Tibial artery (tissue), 4 donors: ENCODE measurements at regions of chr1 and their contacts with region 1.

Region 1: DNA sequence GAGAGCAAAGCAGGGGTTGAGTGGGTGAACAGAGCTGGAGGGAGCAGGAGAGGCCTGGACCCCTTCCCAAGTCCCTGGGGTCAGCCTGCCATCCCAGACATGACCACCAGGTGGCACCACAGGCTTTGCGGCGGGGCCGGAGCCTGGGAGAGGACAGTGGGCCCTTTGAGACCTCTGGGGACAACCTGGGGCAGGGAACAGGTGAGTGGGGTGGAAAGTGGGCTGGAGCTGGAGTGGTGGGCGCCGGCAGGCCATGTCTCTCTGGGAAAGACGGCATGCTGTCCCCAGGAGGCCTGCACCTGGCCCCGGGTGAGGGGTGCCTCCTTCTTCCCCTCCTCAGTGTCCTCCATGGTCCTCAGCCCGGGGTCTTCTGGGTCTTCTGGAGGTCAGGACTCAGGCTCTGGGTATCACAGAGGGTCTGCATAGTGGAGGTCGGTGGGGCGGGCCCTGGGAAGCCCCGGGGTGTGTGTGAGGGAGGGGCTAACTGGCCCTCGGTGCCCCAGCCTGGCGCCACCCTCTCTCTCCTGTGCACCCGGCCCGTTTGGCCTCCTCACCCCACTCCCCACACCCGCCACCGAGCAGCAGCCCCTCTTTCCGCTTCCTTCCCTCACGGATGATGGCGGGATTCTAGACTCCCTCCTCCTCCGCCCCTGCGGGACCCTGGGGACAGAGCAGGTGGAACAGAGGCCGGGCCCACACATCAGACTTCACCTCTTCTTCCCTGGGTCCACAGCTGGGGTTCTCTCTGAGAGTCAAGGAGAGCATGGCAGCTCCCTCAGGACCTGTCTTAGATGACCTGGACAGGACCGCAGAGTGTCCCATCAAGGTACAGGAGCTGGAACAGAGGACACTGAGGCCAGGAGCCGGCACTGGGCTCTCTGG is 28.4 kb upstream of the PKP1 start:
- DNase-seq: no peak
- H3K4me3 ChIP-seq: no peak overlapping the region
- H3K27ac ChIP-seq: no peak overlapping the region
- H3K4me1 ChIP-seq: peaks cover 0 to 6% (median 4%) of the 10 kb centered on the region in 4 donors
- H3K27me3 ChIP-seq: peaks cover 0 to 25% of the 10 kb centered on the region in 2 donors
- CTCF ChIP-seq: peak; percentile 94 to 97

Region 2: DNA sequence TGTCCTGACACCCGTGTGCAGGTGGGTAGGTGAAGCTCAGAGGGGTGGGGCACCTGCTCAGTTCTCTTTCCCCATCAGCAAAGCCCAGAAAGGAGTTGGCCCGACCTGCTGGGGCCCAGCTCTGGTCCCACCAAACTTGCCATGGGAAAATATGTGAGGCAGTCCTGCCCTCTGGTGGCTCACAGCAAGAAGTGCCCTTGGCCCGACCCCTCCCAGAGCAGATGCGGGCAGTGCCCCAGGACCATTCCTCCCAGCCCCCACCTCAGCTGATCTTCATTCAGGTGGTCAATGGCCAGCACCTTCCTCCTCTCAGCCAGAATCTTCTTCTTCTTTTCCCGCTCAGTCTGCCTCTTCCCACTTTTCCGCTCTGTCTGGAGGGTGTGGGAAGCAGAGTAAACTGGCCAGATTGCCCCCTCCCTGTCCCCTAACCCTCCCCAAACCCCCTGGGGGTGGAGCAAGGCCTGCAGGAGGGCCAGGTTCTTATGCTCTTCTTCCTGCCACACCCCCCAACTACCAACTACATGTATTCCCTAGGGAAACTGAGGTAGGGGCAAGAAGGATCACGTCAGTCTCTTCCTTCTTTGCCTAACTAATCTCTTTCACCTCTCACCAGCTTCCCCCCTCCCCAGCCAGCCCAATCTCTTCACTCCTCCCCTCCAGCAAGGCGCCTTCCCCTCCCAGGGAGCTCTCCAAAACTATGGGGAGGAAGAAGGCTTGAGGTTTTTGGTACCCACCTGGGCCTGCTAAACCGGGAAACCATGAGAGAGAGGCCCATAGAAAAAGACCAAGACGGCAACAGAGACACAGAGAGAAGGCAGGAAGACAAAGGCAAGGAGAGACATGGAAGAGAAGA is 107.0 kb after region 1 on chr1:
- intact Hi-C with region 1: loop called (anchors 5 kb)
- DNase-seq: no peak
- H3K4me3 ChIP-seq: no peak overlapping the region
- H3K27ac ChIP-seq: no peak overlapping the region
- H3K4me1 ChIP-seq: no peaks in the 10 kb centered on the region
- H3K27me3 ChIP-seq: peaks cover 0 to 33% of the 10 kb centered on the region in 2 donors
- CTCF ChIP-seq: peak; percentile 67 to 68

Region 3: DNA sequence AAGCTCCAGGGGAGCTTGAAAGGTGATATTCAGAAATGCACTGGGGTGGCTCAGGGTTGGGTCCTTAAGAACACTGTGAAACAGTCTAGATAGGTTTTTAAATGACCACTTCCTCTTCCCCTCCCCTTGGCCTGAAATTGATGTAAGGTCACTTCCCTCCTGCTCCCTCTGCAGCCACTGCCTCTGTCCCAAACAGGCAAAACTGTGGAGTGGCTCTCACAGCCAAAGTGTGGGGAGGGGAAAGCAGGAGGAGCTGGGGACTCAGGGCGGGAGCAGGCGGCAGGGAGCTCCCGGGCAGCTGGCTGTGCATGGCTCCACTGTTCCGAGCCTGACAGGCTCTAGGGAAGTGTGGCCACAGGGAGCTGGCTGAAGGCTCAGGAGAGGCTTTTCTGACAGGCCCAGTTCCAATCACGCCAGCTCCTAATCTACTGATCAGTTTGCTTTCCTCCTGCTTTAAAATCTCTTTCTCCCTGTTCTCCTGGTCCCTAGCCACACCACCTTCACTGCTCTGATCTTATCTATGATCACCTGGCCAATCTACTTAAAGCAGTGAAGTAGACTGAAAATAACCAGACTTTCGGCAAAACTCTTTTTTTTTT is 257.2 kb after region 1 on chr1:
- intact Hi-C with region 1: loop called (anchors 5 kb)
- DNase-seq: peak; percentile 61 to 84
- H3K4me3 ChIP-seq: no peak overlapping the region
- H3K27ac ChIP-seq: peak overlapping the region; percentile 57 to 65
- H3K4me1 ChIP-seq: peaks cover 0 to 42% (median 29%) of the 10 kb centered on the region in 4 donors
- H3K27me3 ChIP-seq: no peaks in the 10 kb centered on the region
- CTCF ChIP-seq: no peak

Region 4: DNA sequence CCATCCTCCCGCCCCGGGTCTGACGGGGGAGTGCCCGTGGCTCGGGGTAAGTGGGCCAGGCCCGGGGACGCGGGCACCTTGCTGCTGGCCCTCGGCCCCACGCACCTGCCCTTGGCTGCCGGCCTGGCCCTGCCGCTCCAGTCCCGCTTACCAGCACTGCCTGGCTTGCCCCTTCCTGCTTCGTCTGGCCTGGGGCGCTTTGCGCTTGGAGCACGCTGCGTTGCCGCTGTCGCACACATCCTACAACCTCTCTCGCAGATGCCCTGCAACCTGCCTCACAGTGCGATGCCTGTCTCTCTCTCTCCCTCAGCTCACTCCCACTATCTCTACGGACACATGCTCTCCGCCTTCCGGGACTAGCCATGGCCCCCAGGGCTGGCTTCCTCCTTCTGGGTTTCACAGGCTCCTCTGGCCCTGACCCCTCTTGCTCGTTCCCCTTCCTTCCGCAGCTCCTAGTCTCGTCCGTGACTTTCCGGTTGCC is 1821.2 kb after region 1 on chr1:
- intact Hi-C with region 1: no loop called
- DNase-seq: peak in 1 of 2 donors; percentile 41
- H3K4me3 ChIP-seq: peak overlapping the region; percentile 20 to 36
- H3K27ac ChIP-seq: no peak overlapping the region
- H3K4me1 ChIP-seq: peaks cover 0 to 6% (median 0%) of the 10 kb centered on the region in 4 donors
- H3K27me3 ChIP-seq: peaks cover 0 to 33% of the 10 kb centered on the region in 2 donors
- CTCF ChIP-seq: no peak